Activated CD8-positive, alpha-beta T cell treated with anti-CD3 and anti-CD28 coated beads for 36 hours (primary cell): ENCODE measurements at regions of chr2 and their contacts with region 1.

Region 1: GRCh38 chr2:197310271-197310985 is at the start of gene ANKRD44:
- DNase-seq: peak; percentile 91
- ATAC-seq: peak; percentile 65
- H3K4me3 Mint-ChIP-seq: peak within 1 kb of the TSS; percentile 96
- H3K27ac Mint-ChIP-seq: peak within 1 kb of the TSS; percentile 99
- H3K4me1 Mint-ChIP-seq: peaks cover 63% of the 10 kb centered on the region
- H3K27me3 Mint-ChIP-seq: no peaks in the 10 kb centered on the region
- CTCF ChIP-seq: no peak
- total RNA-seq, gene ANKRD44: 131 to 132 TPM

Region 2: GRCh38 chr2:197145471-197146138 is 164.8 kb before region 1 on chr2:
- CTCF ChIA-PET with region 1: no interaction called
- POLR2A ChIA-PET with region 1: no interaction called
- intact Hi-C with region 1: no loop called
- DNase-seq: peak; percentile 35
- ATAC-seq: peak; percentile 69
- H3K4me3 Mint-ChIP-seq: no peak overlapping the region
- H3K27ac Mint-ChIP-seq: peak overlapping the region; percentile 92
- H3K4me1 Mint-ChIP-seq: peaks cover 71% of the 10 kb centered on the region
- H3K27me3 Mint-ChIP-seq: no peaks in the 10 kb centered on the region
- CTCF ChIP-seq: no peak

Region 3: DNA sequence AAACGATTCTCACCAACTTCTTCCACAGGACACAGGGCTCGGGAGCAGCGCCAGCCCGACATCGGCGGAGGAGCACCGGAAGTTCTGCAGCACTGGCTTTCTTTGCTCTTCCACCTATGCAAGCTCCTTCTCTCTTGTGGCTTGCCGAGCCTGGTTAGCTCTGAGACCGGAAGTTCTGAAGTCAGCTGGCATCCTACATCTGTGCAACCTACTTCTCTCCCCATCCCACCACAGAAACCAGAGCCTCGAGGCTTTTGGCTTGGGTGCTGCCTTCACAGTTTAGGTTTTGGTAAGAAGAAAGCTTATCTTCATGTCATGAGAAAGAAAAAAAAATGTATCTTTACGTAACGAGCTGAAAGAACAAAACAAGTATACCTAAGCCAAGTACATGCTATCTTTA is 111.5 kb before region 1 on chr2:
- CTCF ChIA-PET with region 1: interaction called, 6 read pairs
- POLR2A ChIA-PET with region 1: interaction called, 34 read pairs
- intact Hi-C with region 1: loop called (anchors 2 kb)
- DNase-seq: peak; percentile 96
- ATAC-seq: peak; percentile 86
- H3K4me3 Mint-ChIP-seq: peak overlapping the region; percentile 78
- H3K27ac Mint-ChIP-seq: peak overlapping the region; percentile 94
- H3K4me1 Mint-ChIP-seq: peaks cover 89% of the 10 kb centered on the region
- H3K27me3 Mint-ChIP-seq: no peaks in the 10 kb centered on the region
- CTCF ChIP-seq: no peak

Region 4: DNA sequence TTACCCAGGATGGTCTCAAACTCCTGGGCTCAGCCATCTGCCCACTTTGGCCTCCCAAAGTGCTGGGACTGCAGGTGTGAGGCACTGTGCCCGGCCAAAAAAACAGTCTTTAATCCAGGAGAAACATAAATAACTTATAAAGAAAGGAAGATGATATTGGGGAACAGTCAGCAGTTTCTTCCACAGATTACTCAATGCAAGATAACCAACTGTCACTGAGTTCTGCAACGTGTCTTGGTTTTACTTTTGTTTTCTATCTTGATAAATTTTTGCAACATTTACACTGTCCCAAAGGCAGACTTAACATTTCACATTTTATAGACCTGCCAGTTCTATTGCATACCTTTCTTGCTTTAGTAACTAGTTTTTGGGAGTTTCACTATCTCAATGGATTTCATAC is 71.0 kb before region 1 on chr2:
- CTCF ChIA-PET with region 1: interaction called, 6 read pairs
- POLR2A ChIA-PET with region 1: interaction called, 12 read pairs
- intact Hi-C with region 1: no loop called
- DNase-seq: no peak
- ATAC-seq: peak; percentile 45
- H3K4me3 Mint-ChIP-seq: peak overlapping the region; percentile 75
- H3K27ac Mint-ChIP-seq: peak overlapping the region; percentile 91
- H3K4me1 Mint-ChIP-seq: peaks cover 84% of the 10 kb centered on the region
- H3K27me3 Mint-ChIP-seq: no peaks in the 10 kb centered on the region
- CTCF ChIP-seq: no peak

Region 5: DNA sequence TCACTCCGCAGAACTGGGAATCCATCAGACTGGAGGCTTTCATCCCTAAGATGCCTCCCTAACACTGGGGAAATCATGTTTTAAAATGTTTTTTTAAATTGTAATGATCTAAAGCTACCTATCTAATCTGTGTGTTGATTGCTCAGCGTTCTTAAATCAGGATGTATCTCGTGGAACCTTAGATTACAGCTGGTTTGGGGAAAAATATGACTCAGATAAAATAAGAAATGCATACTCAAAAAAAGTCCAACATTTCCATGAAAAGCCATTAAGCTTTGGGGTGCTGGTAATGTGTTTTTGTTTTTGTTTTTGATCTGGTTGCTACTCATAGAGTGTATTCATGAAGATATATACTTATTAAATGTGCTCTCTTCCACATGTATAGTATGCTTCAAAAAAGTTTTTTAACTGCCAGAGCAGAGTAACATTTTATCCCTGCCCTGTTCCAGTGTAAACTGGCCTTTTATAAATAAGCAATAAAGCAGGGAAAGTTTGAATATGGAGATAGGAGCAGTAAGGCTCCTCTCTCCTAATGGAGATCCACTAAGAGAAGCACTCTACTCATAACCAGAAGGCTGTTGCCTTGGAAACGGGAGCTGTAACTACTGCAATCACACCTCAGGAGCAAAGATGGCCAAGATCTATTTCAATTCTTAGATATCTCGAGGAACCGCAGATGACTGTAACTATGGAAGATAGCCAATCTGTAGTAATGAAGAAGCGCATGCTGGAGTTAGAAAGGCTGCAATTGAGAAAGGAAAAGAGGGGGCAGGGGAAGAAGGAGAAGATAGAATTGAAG is 41.4 kb before region 1 on chr2:
- CTCF ChIA-PET with region 1: no interaction called
- POLR2A ChIA-PET with region 1: interaction called, 47 read pairs
- intact Hi-C with region 1: no loop called
- DNase-seq: peak; percentile 69
- ATAC-seq: peak; percentile 60
- H3K4me3 Mint-ChIP-seq: no peak overlapping the region
- H3K27ac Mint-ChIP-seq: peak overlapping the region; percentile 90
- H3K4me1 Mint-ChIP-seq: peaks cover 91% of the 10 kb centered on the region
- H3K27me3 Mint-ChIP-seq: no peaks in the 10 kb centered on the region
- CTCF ChIP-seq: no peak

Region 6: GRCh38 chr2:197293252-197294007 is 17.0 kb before region 1 on chr2:
- CTCF ChIA-PET with region 1: interaction called, 15 read pairs
- POLR2A ChIA-PET with region 1: interaction called, 52 read pairs
- intact Hi-C with region 1: loop called (anchors 2 kb)
- DNase-seq: peak; percentile 69
- ATAC-seq: peak; percentile 73
- H3K4me3 Mint-ChIP-seq: peak overlapping the region; percentile 81
- H3K27ac Mint-ChIP-seq: peak overlapping the region; percentile 95
- H3K4me1 Mint-ChIP-seq: peaks cover 86% of the 10 kb centered on the region
- H3K27me3 Mint-ChIP-seq: no peaks in the 10 kb centered on the region
- CTCF ChIP-seq: no peak

Region 7: DNA sequence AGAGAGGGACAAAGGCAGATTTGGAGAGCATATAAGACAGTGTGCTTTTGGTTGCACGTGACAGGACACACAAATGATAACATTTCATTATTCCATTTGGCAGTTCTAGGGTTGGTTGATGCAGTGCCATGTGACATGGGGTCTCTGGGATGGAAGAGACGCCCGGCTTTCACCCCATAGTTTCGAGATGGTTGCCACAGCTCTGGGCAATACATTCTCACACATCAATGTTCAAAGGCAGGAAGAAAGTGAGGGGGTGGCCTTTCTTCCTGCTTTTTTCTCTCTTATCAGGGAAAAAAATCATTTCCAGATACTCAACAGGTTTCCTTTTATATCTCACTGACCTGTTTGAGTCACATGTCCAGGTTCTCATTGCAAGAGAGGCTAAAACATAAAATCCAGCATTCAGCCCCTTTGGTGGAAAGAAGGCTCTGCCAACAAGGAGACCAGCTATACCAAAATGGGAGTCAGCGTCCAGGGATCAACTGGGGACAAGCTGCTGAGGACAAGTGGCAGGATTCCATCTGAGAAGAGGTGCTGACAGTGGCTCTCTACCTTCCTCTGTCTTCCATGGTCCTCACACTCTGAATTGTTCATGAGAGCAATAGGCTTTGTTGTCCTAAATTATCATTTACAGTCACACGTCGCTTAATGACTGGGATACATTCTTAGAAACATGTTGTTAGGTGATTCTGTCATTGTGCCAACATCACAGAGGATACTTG is 29.2 kb after region 1 on chr2:
- CTCF ChIA-PET with region 1: no interaction called
- POLR2A ChIA-PET with region 1: no interaction called
- intact Hi-C with region 1: no loop called
- DNase-seq: no peak
- ATAC-seq: no peak
- H3K4me3 Mint-ChIP-seq: no peak overlapping the region
- H3K27ac Mint-ChIP-seq: peak overlapping the region; percentile 3
- H3K4me1 Mint-ChIP-seq: peaks cover 15% of the 10 kb centered on the region
- H3K27me3 Mint-ChIP-seq: no peaks in the 10 kb centered on the region
- CTCF ChIP-seq: no peak

Region 8: DNA sequence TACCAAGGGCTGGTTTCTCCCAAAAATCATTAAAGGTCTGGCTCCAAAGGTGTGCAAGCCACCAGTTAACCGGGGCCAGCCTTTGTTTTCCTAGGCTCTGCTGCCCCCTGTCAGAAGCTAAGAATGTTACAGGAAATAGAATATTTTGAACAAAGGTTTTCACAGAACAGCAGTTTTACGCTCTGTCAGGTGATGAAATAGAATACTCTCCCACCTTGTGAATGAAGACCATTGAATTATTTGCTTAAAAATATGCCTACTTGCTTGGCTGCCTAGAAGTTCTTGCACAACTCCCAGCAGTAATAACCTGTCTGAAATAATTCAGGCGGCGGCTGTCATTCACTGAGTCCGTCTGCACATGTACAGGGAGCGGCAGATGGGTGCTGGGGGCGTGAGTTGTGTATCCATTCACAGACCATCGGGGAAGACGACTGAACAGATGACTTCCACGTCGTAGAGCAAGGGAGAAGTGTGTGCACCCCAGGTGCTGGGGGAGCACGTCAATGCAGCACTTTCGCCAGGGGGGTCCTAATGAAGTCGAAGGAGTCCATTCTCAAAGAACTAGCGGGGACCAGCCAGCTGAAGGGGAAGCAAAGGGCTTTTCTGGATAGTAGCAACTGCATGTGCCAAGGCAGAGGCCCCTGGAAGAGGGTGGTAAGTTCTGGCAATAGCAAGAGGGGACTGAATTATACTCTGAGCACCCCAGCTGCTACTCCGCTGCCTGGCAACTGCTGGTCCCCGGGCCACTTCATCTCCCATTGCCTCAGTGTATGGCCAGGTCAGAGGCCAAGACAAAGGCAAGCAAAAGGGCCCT is 68.3 kb after region 1 on chr2:
- CTCF ChIA-PET with region 1: interaction called, 5 read pairs
- POLR2A ChIA-PET with region 1: no interaction called
- intact Hi-C with region 1: loop called (anchors 5 kb)
- DNase-seq: peak; percentile 71
- ATAC-seq: peak; percentile 86
- H3K4me3 Mint-ChIP-seq: no peak overlapping the region
- H3K27ac Mint-ChIP-seq: no peak overlapping the region
- H3K4me1 Mint-ChIP-seq: peaks cover 24% of the 10 kb centered on the region
- H3K27me3 Mint-ChIP-seq: no peaks in the 10 kb centered on the region
- CTCF ChIP-seq: peak; percentile 92